ENCODE measurements at regions of chr14 and their contacts with region 1.

Region 1: DNA sequence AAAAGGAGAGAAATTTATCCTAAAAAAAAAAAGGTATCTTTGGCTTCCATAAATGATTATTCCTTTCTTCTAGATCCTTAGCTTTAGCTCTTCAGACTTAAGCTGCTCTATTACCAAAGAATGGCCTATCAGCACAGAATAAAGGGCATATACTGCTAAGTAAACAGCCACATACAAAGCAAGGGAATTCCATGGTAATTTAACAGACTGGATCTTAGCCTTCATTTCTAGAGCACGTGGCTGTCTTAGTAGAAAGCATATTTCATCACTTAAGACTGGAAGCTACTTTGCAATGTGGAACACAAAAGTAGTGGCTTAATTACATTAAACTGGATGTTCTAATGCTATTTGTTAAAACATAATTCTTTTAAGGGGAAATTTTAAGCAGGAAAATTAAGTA is 23.1 kb downstream of the TMED10 start:
- DNase-seq: no peak
- H3K4me3 ChIP-seq: no peak overlapping the region
- H3K27ac ChIP-seq: no peak overlapping the region
- H3K4me1 ChIP-seq: peaks cover 10% of the 10 kb centered on the region; the same call in 1 of the 2 replicates
- H3K27me3 ChIP-seq: no peaks in the 10 kb centered on the region
- CTCF ChIP-seq: no peak

Region 2: GRCh38 chr14:74866708-74867389 is 286.4 kb before region 1 on chr14:
- CTCF ChIA-PET with region 1: interaction called, 21 read pairs
- POLR2A ChIA-PET with region 1: no interaction called
- intact Hi-C with region 1: no loop called
- DNase-seq: no peak
- H3K4me3 ChIP-seq: no peak overlapping the region
- H3K27ac ChIP-seq: no peak overlapping the region
- H3K4me1 ChIP-seq: no peaks in the 10 kb centered on the region
- H3K27me3 ChIP-seq: peaks cover 18% of the 10 kb centered on the region
- CTCF ChIP-seq: no peak

Region 3: DNA sequence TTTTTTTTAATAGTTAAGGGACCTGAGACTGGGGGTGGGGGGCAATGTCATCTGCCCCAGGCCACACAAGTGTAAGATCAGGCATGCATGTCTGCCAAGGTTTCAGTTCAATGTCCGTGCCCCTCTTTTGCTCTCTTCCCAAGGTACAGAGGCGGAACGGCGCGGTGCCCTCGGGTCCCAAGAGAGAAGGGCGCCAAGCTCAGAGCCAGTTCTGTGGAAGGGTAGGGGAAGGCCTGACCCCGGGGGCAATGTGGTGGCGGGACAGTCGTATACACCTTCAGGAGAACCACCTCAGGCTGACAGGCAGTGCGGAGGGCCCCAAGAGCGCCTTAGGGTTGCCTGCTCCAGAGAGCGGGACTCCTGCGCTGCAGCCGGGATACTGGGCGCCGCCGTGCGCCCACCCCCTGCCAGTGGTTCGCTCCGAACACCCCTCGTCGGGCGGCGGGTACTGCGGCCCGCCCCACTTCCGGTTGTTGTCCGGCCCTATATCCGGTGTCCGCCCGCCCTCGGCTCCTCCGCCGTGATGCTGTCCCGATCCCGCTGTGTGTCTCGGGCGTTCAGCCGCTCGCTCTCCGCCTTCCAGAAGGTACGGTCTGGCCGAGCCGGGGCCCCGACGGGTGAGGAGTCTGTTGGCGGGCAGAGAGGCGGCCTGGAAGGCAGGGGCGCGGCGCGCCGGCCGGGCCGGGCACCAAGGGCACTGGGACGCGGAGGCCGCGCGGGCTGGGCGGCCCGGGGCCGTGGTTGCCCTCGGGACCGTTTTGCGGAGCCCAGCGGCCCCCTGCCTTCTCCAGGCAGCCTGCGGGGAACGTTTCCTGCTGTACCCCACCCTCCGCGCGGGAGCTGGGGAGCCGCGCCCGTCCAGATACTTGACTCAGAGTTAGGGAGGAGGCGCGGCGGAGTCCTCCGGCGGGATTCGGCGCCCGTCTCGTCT is 271.6 kb before region 1 on chr14 and contains the start of gene DLST:
- CTCF ChIA-PET with region 1: no interaction called
- POLR2A ChIA-PET with region 1: no interaction called
- intact Hi-C with region 1: no loop called
- DNase-seq: peak; percentile 78 to 99
- H3K4me3 ChIP-seq: peak within 1 kb of the TSS; percentile 75
- H3K27ac ChIP-seq: peak within 1 kb of the TSS; percentile 17
- H3K4me1 ChIP-seq: peaks cover 49% of the 10 kb centered on the region
- H3K27me3 ChIP-seq: no peaks in the 10 kb centered on the region
- CTCF ChIP-seq: no peak
- total RNA-seq, gene DLST: 309 and 320 TPM in 2 replicates

Region 4: DNA sequence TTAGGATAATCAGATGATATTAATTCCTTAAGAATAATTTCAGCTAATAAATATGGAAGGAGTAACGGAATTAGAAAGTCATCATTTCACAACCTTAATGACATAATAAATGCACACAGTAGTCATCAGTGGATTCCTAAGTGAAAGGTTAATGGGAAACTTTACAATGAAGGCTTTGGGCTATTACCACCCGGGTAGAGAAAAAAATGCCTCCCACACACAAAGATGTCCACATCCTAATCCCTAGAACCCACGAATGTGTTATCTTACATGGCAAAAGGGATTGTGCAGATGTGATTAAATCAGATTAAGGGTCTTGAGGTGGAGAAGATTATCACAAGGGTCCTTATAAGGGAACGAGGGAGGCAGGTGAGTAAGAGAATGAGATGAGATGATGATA is 17.5 kb after region 1 on chr14:
- CTCF ChIA-PET with region 1: no interaction called
- POLR2A ChIA-PET with region 1: no interaction called
- intact Hi-C with region 1: no loop called
- DNase-seq: no peak
- H3K4me3 ChIP-seq: no peak overlapping the region
- H3K27ac ChIP-seq: no peak overlapping the region
- H3K4me1 ChIP-seq: peaks cover 35% of the 10 kb centered on the region
- H3K27me3 ChIP-seq: no peaks in the 10 kb centered on the region
- CTCF ChIP-seq: no peak

Region 5: GRCh38 chr14:75182841-75183624 is 29.7 kb after region 1 on chr14:
- CTCF ChIA-PET with region 1: interaction called, 17 read pairs
- POLR2A ChIA-PET with region 1: interaction called, 3 read pairs
- intact Hi-C with region 1: no loop called
- DNase-seq: peak; percentile 53 to 94
- H3K4me3 ChIP-seq: no peak overlapping the region
- H3K27ac ChIP-seq: peak overlapping the region; percentile 63
- H3K4me1 ChIP-seq: peaks cover 39% of the 10 kb centered on the region
- H3K27me3 ChIP-seq: no peaks in the 10 kb centered on the region
- CTCF ChIP-seq: no peak; the same call in 1 of the 2 replicates

Region 6: GRCh38 chr14:75350505-75351060 is 197.3 kb after region 1 on chr14:
- CTCF ChIA-PET with region 1: no interaction called
- POLR2A ChIA-PET with region 1: no interaction called
- intact Hi-C with region 1: no loop called
- DNase-seq: no peak
- H3K4me3 ChIP-seq: no peak overlapping the region
- H3K27ac ChIP-seq: no peak overlapping the region
- H3K4me1 ChIP-seq: no peaks in the 10 kb centered on the region
- H3K27me3 ChIP-seq: no peaks in the 10 kb centered on the region
- CTCF ChIP-seq: no peak